ENCODE measurements at regions of chr1 and their contacts with region 1.

Region 1: DNA sequence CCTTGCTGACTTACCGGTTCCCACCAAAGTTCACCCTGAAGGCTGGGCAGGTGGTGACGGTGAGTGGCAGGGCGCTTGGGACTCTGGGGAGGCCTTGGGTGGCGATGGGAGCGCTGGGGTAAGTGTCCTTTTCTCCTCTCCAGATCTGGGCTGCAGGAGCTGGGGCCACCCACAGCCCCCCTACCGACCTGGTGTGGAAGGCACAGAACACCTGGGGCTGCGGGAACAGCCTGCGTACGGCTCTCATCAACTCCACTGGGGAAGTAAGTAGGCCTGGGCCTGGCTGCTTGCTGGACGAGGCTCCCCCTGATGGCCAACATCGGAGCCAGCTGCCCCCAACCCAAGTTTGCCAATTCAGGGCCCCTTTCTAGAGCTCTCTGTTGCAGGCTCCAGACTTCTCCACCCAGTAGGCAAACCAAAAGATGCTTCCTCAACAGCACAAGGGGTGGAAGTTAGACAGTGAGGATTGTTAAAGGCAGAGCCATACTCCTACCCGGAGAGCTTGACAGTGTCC is 16.4 kb upstream of the SEMA4A start:
- DNase-seq: no peak
- H3K4me3 ChIP-seq: no peak overlapping the region
- H3K27ac ChIP-seq: no peak overlapping the region
- H3K4me1 ChIP-seq: peaks cover 0 to 11% (median 9%) of the 10 kb centered on the region in 3 donors
- H3K27me3 ChIP-seq: no peaks in the 10 kb centered on the region
- CTCF ChIP-seq: no peak

Region 2: GRCh38 chr1:156090822-156091188 is 46.2 kb before region 1 on chr1:
- intact Hi-C with region 1: loop called (anchors 5 kb)
- DNase-seq: peak; percentile 86 to 94 (median 89)
- H3K4me3 ChIP-seq: no peak overlapping the region
- H3K27ac ChIP-seq: no peak overlapping the region
- H3K4me1 ChIP-seq: peaks cover 0 to 4% (median 0%) of the 10 kb centered on the region in 3 donors
- H3K27me3 ChIP-seq: no peaks in the 10 kb centered on the region
- CTCF ChIP-seq: peak; percentile 79

Region 3: GRCh38 chr1:156262461-156263287 is 125.6 kb after region 1 on chr1:
- intact Hi-C with region 1: no loop called
- DNase-seq: no peak
- H3K4me3 ChIP-seq: no peak overlapping the region
- H3K27ac ChIP-seq: no peak overlapping the region
- H3K4me1 ChIP-seq: no peaks in the 10 kb centered on the region
- H3K27me3 ChIP-seq: no peaks in the 10 kb centered on the region
- CTCF ChIP-seq: no peak

Region 4: DNA sequence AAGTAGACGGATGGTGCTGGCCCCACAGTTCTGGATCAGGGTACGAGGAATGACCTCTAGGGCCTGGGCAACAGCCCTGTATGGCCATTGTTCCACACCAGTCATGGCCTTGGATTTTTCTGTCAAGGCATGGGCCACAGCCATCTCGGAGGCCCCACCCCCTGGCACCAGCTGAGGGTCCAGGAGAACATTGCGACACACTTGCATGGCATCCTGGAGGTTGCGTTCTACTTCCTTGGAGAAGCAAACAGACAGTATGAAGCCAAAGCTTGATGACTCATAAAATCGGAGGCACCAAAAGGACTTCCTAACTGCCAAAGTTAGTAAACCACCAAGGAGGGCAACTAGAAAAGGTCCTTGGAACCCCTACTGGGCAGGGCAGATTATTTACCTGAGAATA is 173.9 kb after region 1 on chr1:
- intact Hi-C with region 1: no loop called
- DNase-seq: no peak
- H3K4me3 ChIP-seq: no peak overlapping the region
- H3K27ac ChIP-seq: no peak overlapping the region
- H3K4me1 ChIP-seq: no peaks in the 10 kb centered on the region
- H3K27me3 ChIP-seq: no peaks in the 10 kb centered on the region
- CTCF ChIP-seq: no peak

Region 5: GRCh38 chr1:156608981-156609380 is 472.0 kb after region 1 on chr1:
- intact Hi-C with region 1: no loop called
- DNase-seq: peak in 2 of 5 donors; percentile 27 to 32
- H3K4me3 ChIP-seq: no peak overlapping the region
- H3K27ac ChIP-seq: no peak overlapping the region
- H3K4me1 ChIP-seq: no peaks in the 10 kb centered on the region
- H3K27me3 ChIP-seq: peaks cover 3% of the 10 kb centered on the region
- CTCF ChIP-seq: peak; percentile 38

Measured in kidney (tissue), 22 donors.